ENCODE measurements at regions of chr6 and their contacts with region 1.

Region 1: GRCh38 chr6:155314092-155314772 is at the start of gene TFB1M:
- DNase-seq: peak; percentile 98
- ATAC-seq: peak; percentile 99 to 100 (median 99)
- H3K4me3 ChIP-seq: peak within 1 kb of the TSS; percentile 61 to 94 (median 80)
- H3K27ac ChIP-seq: peak within 1 kb of the TSS; percentile 32 to 90 (median 84)
- H3K4me1 ChIP-seq: peaks cover 0 to 28% (median 14%) of the 10 kb centered on the region in 9 donors
- H3K27me3 ChIP-seq: no peaks in the 10 kb centered on the region
- CTCF ChIP-seq: no peak
- total RNA-seq, gene TFB1M: 12.8 to 23.1 (median 17.9) TPM

Region 2: GRCh38 chr6:155188707-155189496 is 125.3 kb before region 1 on chr6:
- intact Hi-C with region 1: loop called in 1 of 10 experiments (anchors 10 kb)
- DNase-seq: no peak
- ATAC-seq: peak in 6 of 8 donors; percentile 20 to 59 (median 36)
- H3K4me3 ChIP-seq: peak overlapping the region in 3 of 10 donors; percentile 5 to 9 (median 8)
- H3K27ac ChIP-seq: peak overlapping the region in 6 of 10 donors; percentile 1 to 61 (median 30)
- H3K4me1 ChIP-seq: peaks cover 0 to 53% (median 22%) of the 10 kb centered on the region in 9 donors
- H3K27me3 ChIP-seq: no peaks in the 10 kb centered on the region
- CTCF ChIP-seq: no peak

Region 3: DNA sequence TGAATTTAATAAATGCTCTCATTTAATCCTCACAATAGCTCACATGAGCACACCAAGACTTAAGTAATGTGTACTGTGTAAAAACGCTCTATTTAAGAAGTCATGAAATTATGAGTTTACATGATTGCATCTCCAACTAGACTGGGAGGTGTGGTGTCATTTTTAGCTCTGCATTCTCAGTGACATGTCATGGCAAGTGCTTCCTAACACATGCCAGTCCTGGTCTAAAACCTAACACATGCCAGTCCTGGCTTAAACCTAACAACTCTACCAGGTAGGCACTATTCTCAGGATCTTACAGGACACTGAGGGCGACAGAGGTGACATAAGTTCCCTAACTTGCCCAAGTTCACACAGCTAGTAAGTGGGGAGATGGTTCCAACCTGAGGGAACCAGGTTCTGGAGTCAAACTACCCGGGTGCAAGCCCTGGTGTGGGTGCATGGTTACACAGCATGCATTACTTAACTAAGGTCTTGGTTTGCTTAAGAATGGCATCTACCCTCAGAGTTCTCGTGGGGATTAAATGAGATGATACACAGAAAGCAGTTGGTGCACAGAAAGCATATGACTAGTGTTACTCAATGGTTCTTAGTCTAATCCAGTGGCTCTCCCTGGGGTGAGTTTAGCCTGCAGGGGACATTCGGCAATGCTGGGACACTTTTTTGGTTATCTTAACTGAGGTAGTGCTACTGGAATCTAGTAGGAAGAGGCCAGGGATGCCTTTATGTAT is 35.7 kb before region 1 on chr6:
- intact Hi-C with region 1: loop called in 1 of 10 experiments (anchors 1 kb)
- DNase-seq: no peak
- ATAC-seq: peak in 5 of 8 donors; percentile 16 to 52 (median 39)
- H3K4me3 ChIP-seq: no peak overlapping the region
- H3K27ac ChIP-seq: peak overlapping the region in 5 of 10 donors; percentile 4 to 48 (median 32)
- H3K4me1 ChIP-seq: peaks cover 7 to 63% (median 24%) of the 10 kb centered on the region in 9 donors
- H3K27me3 ChIP-seq: no peaks in the 10 kb centered on the region
- CTCF ChIP-seq: no peak